PC-9 (cell line): ENCODE measurements at regions of chr1 and their contacts with region 1.

Region 1: GRCh38 chr1:151739590-151740375 is 18.5 kb downstream of the RIIAD1 start:
- DNase-seq: peak; percentile 58 to 78
- H3K4me3 ChIP-seq: no peak overlapping the region
- H3K27ac ChIP-seq: no peak overlapping the region
- H3K4me1 ChIP-seq: peaks cover 12% of the 10 kb centered on the region
- H3K27me3 ChIP-seq: no peaks in the 10 kb centered on the region
- CTCF ChIP-seq: no peak; the same call in 1 of the 2 replicates

Region 2: GRCh38 chr1:151292207-151293030 is 447.4 kb before region 1 on chr1:
- CTCF ChIA-PET with region 1: no interaction called
- POLR2A ChIA-PET with region 1: interaction called, 23 read pairs
- intact Hi-C with region 1: no loop called
- DNase-seq: peak in 1 of 2 experiments; percentile 24
- H3K4me3 ChIP-seq: no peak overlapping the region
- H3K27ac ChIP-seq: no peak overlapping the region
- H3K4me1 ChIP-seq: no peaks in the 10 kb centered on the region
- H3K27me3 ChIP-seq: no peaks in the 10 kb centered on the region
- CTCF ChIP-seq: no peak

Region 3: GRCh38 chr1:151399890-151400495 is 339.8 kb before region 1 on chr1:
- CTCF ChIA-PET with region 1: interaction called, 4 read pairs
- POLR2A ChIA-PET with region 1: interaction called, 10 read pairs
- intact Hi-C with region 1: no loop called
- DNase-seq: peak in 1 of 2 experiments; percentile 4
- H3K4me3 ChIP-seq: peak overlapping the region; percentile 91
- H3K27ac ChIP-seq: peak overlapping the region; percentile 58
- H3K4me1 ChIP-seq: peaks cover 12% of the 10 kb centered on the region
- H3K27me3 ChIP-seq: no peaks in the 10 kb centered on the region
- CTCF ChIP-seq: no peak

Region 4: DNA sequence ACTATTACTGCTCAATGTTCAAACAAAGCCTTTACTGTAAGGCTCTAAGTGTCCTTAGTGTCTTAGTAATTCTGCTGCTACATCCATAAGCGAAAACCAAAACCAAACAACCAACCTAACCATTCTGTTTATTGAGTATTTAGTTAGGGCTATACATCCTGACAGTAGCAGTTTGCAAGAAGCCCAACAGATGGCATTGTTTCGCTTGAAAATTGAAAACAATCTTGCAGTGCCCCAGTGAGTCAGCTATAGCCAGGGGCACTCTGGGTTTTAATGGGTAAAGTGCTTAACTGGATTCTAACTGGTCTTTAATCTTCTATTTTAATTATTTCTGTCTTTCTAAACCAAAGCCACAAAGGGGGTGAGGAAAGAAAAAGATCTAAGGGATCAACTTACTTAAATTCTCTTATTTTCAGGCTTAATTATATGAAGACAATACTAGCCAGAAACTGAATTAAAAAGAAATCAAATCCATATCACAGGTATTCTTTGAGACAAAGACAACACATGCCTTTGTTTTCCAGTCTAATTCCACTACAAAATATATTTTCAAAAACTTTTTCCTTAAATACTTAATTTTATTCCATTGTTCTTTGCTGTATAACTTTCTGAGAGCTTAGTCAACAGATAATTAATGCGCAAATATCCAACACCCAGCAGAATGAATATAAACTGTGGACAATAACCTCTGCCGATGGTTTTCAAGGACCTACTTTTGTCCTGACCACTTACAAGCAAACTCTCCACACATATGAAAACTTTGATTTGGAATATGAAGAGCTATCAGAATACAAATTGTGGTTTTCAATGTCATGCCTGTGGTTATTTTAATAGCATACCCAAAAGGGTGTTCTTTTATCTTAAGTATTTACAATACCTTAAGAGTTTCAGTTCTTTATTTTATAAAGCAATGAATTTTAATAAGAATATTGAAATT is 295.7 kb before region 1 on chr1:
- CTCF ChIA-PET with region 1: interaction called, 3 read pairs
- POLR2A ChIA-PET with region 1: no interaction called
- intact Hi-C with region 1: loop called (anchors 1 kb)
- DNase-seq: peak; percentile 62 to 77
- H3K4me3 ChIP-seq: no peak overlapping the region
- H3K27ac ChIP-seq: peak overlapping the region; percentile 62
- H3K4me1 ChIP-seq: peaks cover 11% of the 10 kb centered on the region
- H3K27me3 ChIP-seq: no peaks in the 10 kb centered on the region
- CTCF ChIP-seq: peak; percentile 84

Region 5: GRCh38 chr1:151547119-151547899 is 192.5 kb before region 1 on chr1:
- CTCF ChIA-PET with region 1: no interaction called
- POLR2A ChIA-PET with region 1: no interaction called
- intact Hi-C with region 1: loop called (anchors 5 kb)
- DNase-seq: peak; percentile 92 to 99
- H3K4me3 ChIP-seq: peak overlapping the region; percentile 24; the same call in 1 of the 2 replicates
- H3K27ac ChIP-seq: peak overlapping the region; percentile 99
- H3K4me1 ChIP-seq: peaks cover 87% of the 10 kb centered on the region
- H3K27me3 ChIP-seq: no peaks in the 10 kb centered on the region
- CTCF ChIP-seq: no peak; the same call in 1 of the 2 replicates

Region 6: GRCh38 chr1:151581952-151582351 is 157.8 kb before region 1 on chr1:
- CTCF ChIA-PET with region 1: no interaction called
- POLR2A ChIA-PET with region 1: no interaction called
- intact Hi-C with region 1: no loop called
- DNase-seq: peak in 1 of 2 experiments; percentile 59
- H3K4me3 ChIP-seq: no peak overlapping the region
- H3K27ac ChIP-seq: no peak overlapping the region
- H3K4me1 ChIP-seq: peaks cover 92% of the 10 kb centered on the region
- H3K27me3 ChIP-seq: no peaks in the 10 kb centered on the region
- CTCF ChIP-seq: no peak

Region 7: DNA sequence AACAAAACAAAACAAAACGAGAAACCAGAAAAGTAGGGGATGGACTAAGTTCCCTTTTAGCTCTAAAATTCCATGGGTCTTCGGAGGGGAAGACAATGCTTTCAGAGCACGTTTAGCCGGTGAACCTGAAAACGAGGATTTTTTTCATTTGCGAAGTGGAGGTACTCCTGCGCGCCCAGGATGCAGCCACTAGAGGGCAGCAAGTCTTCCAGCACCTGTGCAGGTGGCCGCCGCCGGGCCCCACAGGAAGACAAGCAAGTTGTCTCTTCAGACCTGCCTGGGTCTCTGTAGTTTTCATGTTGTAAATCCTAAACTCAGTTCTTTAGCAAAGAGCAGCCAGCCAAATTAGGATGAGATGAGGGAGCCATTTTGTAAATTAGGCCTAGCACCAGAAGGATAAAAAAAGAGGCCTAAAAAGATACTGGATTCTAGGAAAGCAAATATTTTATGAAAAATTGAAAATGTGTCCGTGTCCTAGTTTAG is 145.6 kb before region 1 on chr1:
- CTCF ChIA-PET with region 1: interaction called, 3 read pairs
- POLR2A ChIA-PET with region 1: no interaction called
- intact Hi-C with region 1: loop called (anchors 1 kb)
- DNase-seq: peak; percentile 54 to 82
- H3K4me3 ChIP-seq: no peak overlapping the region
- H3K27ac ChIP-seq: no peak overlapping the region
- H3K4me1 ChIP-seq: peaks cover 30% of the 10 kb centered on the region
- H3K27me3 ChIP-seq: no peaks in the 10 kb centered on the region
- CTCF ChIP-seq: peak; percentile 94

Region 8: DNA sequence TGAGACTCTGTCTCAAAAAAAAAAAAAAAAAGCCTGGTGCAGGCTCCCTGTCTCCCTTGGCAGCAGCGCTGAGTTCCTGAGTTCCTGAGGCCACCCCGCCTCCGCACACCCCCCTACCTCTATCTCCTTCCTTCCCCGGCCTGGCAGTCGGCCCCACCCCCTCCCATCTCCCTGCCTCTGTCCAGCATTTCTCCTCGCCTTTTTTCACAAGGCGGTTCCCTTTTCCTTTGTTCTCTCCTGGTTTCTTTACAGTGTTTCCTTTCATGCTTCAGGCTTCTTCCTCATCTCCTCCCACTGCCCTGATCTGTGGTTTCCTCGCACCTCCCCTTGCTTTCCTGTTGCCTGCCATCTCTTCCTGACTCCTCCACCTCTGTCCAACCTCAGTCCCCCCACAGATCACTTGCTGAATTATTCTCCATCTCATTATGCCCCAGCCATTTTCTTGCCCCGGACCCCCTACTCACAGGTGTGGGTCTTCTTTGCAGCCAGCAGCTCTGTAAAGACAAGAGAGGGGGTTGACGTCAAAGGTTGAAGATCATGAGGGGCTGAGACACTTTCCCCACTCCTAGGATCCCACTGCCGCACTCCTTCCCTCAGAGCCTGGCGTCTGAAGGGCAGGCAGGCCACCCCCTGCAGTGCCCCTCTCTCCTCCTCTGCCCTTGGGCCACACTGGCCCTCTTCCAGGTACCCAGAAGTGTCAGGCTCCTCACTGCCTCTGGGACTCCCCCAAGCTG is 89.3 kb after region 1 on chr1:
- CTCF ChIA-PET with region 1: no interaction called
- POLR2A ChIA-PET with region 1: no interaction called
- intact Hi-C with region 1: loop called (anchors 2 kb)
- DNase-seq: peak in 1 of 2 experiments; percentile 53
- H3K4me3 ChIP-seq: no peak overlapping the region
- H3K27ac ChIP-seq: no peak overlapping the region
- H3K4me1 ChIP-seq: peaks cover 38% of the 10 kb centered on the region
- H3K27me3 ChIP-seq: no peaks in the 10 kb centered on the region
- CTCF ChIP-seq: no peak